Natural killer cell (primary cell): ENCODE measurements at regions of chr1 and their contacts with region 1.

Region 1: DNA sequence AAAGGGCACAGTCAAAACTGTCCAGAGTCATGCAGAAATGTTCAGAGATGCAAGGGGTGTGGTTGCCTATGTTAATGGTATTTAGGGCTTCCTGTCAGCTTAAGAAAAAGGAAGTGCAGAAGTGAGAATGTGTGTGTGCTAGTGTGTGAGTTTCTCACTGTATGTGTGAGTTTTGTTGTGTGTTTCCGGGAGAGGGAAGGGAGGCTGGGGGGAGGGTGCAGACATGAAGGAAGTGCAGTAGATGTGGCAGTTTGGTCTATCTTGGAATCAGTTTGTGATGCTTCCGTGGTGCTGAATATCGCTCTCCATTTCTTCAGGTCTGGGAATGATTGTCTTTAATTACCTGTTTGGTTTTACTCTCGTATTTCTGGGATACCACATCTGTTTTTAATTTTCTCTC is 16.5 kb upstream of the ATP6V1G3 start:
- DNase-seq: peak; percentile 57 to 89
- ATAC-seq: peak; percentile 85 to 96 (median 93)
- H3K4me3 ChIP-seq: no peak overlapping the region
- H3K4me3 Mint-ChIP-seq: peak overlapping the region; percentile 78
- H3K27ac ChIP-seq: peak overlapping the region; percentile 66
- H3K27ac Mint-ChIP-seq: peak overlapping the region; percentile 78 to 79
- H3K4me1 ChIP-seq: peaks cover 23% of the 10 kb centered on the region
- H3K4me1 Mint-ChIP-seq: peaks cover 66 to 67% of the 10 kb centered on the region in 2 donors
- H3K27me3 ChIP-seq: no peaks in the 10 kb centered on the region
- H3K27me3 Mint-ChIP-seq: no peaks in the 10 kb centered on the region
- CTCF ChIP-seq: no peak

Region 2: GRCh38 chr1:198167436-198167934 is 389.5 kb before region 1 on chr1:
- intact Hi-C with region 1: loop called (anchors 5 kb)
- DNase-seq: peak; percentile 37 to 80
- ATAC-seq: peak; percentile 79 to 92 (median 91)
- H3K4me3 ChIP-seq: no peak overlapping the region
- H3K4me3 Mint-ChIP-seq: peak overlapping the region; percentile 88
- H3K27ac ChIP-seq: peak overlapping the region; percentile 81
- H3K27ac Mint-ChIP-seq: peak overlapping the region; percentile 94 to 96
- H3K4me1 ChIP-seq: peaks cover 50% of the 10 kb centered on the region
- H3K4me1 Mint-ChIP-seq: peaks cover 72% of the 10 kb centered on the region in 2 donors
- H3K27me3 ChIP-seq: no peaks in the 10 kb centered on the region
- H3K27me3 Mint-ChIP-seq: no peaks in the 10 kb centered on the region
- CTCF ChIP-seq: no peak

Region 3: GRCh38 chr1:198598796-198599321 is 41.9 kb after region 1 on chr1:
- intact Hi-C with region 1: loop called (anchors 5 kb)
- DNase-seq: peak in 1 of 2 donors; percentile 34
- ATAC-seq: peak; percentile 51 to 61 (median 61)
- H3K4me3 ChIP-seq: peak overlapping the region; percentile 19
- H3K4me3 Mint-ChIP-seq: peak overlapping the region; percentile 76
- H3K27ac ChIP-seq: peak overlapping the region; percentile 72
- H3K27ac Mint-ChIP-seq: peak overlapping the region; percentile 79 to 90
- H3K4me1 ChIP-seq: peaks cover 17% of the 10 kb centered on the region
- H3K4me1 Mint-ChIP-seq: peaks cover 71 to 73% of the 10 kb centered on the region in 2 donors
- H3K27me3 ChIP-seq: no peaks in the 10 kb centered on the region
- H3K27me3 Mint-ChIP-seq: no peaks in the 10 kb centered on the region
- CTCF ChIP-seq: no peak

Region 4: DNA sequence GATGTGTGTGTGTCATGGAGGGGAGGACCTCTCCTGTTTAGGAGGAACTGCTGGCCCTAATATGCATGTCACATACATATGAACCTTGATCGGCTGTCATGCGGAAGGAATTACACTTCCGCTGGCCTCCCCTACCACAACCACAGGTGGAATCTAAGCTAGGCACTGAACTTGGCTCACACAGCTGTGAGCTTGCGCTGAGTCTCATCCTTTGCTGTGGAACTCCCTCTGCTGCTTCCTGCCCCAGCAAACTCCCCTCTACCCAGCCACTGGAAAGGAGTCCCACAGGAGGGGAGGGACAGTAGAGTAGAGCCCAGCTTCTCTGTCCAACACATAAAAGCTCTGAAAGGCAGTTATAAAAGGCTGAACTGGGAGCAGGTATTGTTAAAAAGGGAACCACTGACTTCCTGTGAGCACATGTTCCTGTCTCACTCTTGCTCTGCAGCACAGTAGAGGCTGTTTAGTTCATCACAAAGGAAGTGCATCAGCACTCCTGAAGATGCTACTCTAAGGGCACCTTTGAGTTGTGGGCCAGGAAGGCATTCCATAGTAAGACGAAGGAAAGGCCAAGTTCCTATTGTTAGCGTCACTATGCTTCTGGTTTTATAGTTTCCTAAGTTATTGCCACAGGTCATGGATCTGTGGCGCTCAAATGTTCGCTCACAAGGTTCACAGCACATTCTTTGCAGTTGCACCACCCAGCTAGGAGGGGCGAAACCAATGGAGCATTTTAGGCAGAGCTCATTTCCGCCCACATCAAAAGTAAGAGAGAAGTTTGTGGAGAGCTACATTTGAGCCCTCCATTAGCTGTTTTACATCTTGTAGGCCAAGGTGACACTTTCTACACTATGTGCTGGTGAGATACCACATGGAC is 64.2 kb after region 1 on chr1:
- intact Hi-C with region 1: loop called (anchors 2 kb)
- DNase-seq: peak; percentile 53 to 86
- ATAC-seq: peak; percentile 70 to 87 (median 83)
- H3K4me3 ChIP-seq: peak overlapping the region; percentile 16
- H3K4me3 Mint-ChIP-seq: peak overlapping the region; percentile 95
- H3K27ac ChIP-seq: peak overlapping the region; percentile 94
- H3K27ac Mint-ChIP-seq: peak overlapping the region; percentile 91 to 99
- H3K4me1 ChIP-seq: peaks cover 54% of the 10 kb centered on the region
- H3K4me1 Mint-ChIP-seq: peaks cover 78 to 81% of the 10 kb centered on the region in 2 donors
- H3K27me3 ChIP-seq: no peaks in the 10 kb centered on the region
- H3K27me3 Mint-ChIP-seq: no peaks in the 10 kb centered on the region
- CTCF ChIP-seq: no peak

Region 5: DNA sequence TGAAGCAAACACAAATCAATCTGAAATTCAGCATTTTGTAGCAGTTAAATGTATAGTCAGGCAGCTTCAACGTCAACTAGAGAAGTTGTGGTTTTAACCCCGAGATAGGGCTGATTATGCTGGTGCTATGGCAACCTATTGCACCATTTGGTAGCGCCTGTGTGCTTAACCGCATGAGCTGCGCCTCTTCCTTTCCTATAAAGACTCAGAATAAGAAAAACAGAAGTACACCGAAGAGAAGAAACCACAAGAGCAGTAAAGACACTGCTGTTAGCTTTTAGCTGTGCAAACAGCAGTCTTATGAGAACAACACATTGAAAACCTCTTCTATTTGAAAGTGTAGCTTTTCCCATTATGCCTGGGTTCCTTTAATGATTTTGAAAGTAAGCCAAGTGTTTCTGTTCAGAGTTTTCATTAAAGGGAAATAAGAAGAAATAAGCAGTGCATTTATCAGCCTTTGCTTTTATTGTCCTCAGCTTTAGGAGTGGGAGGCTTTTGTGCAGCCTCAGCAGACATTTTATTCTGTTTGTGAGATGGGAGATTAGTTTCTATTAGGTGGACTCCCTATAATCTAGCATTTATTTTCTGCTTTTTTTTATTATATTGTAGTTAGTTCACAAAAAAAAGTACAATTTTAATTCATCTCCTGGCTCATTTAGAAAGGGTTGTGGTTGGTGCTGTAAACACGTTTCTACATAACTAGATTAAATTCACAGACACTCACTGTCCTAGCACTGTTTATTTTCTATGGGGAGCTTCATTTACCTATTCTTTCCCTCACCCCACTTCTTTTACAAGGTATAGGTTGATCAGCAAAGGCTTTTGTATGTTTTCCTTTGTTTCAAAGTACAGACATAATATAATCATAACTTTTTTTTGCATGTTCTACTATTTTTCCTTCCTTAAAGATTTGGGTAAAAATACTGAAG is 125.1 kb after region 1 on chr1:
- intact Hi-C with region 1: loop called (anchors 2 kb)
- DNase-seq: peak; percentile 63 to 96
- ATAC-seq: peak; percentile 66 to 93 (median 86)
- H3K4me3 ChIP-seq: peak overlapping the region; percentile 21
- H3K4me3 Mint-ChIP-seq: peak overlapping the region; percentile 78
- H3K27ac ChIP-seq: peak overlapping the region; percentile 90
- H3K27ac Mint-ChIP-seq: peak overlapping the region; percentile 88 to 90
- H3K4me1 ChIP-seq: peaks cover 27% of the 10 kb centered on the region
- H3K4me1 Mint-ChIP-seq: peaks cover 82 to 83% of the 10 kb centered on the region in 2 donors
- H3K27me3 ChIP-seq: no peaks in the 10 kb centered on the region
- H3K27me3 Mint-ChIP-seq: no peaks in the 10 kb centered on the region
- CTCF ChIP-seq: no peak